GM12878 (cell line): ENCODE measurements at regions of chr1 and their contacts with region 1.

Region 1: GRCh38 chr1:54488779-54489626 is 59.0 kb upstream of the ACOT11 start:
- DNase-seq: no peak
- ATAC-seq: peak; percentile 91
- H3K4me3 ChIP-seq: peak overlapping the region; percentile 94
- H3K27ac ChIP-seq: peak overlapping the region; percentile 55
- H3K4me1 ChIP-seq: peaks cover 7% of the 10 kb centered on the region
- H3K27me3 ChIP-seq: peaks cover 0 to 2% of the 10 kb centered on the region in 2 experiments; a peak in 1 of 4 replicates
- CTCF ChIP-seq: peak; percentile 78 to 98 (median 91)
- EP300 ChIP-seq: no peak
- POLR2A ChIP-seq: no peak
- RAD21 ChIP-seq: peak; percentile 85

Region 2: DNA sequence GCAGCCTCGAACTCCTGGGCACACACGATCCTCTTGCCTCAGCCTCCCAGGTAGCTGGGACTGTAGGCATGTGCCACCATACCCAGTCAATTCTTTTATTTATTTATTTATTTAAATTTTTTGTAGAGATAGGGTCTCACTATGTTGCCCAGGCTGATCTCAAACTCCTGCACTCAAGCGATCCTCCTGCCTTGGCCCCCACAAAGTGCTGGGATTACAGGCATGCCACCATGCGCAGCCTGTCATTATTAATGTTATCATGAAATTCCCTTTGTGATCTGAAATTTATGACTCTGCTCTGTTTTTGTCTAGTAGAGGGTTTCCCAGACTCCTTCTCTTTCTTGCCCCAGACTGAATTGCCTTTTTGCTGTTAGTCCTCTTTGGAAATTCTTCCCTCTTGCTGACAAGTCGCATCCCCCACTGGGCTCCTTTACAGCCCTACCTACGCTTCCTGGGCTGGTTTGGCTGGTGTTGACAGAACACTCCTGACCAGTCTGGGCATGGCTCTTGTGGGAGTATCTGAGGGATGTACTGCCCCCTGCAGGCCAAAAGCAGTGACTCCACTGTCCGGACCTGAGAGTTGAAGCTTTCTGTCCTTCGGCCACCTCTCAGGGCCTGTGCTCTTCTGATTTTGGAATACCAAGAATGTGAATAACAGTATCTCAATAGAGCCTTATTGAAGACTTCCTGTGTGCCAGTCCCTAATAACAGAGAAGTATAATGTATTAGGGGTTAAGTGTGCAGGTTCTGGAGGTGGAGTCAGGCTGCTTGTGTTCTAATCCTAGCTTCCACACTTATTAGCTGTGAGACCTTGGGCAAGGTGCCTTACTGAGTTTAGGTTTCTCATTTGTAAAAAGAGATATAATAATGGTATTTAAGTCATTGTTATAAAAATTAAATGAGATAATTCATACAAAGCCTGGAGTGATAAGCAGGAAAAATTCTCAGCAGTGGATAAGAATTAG is 407.4 kb before region 1 on chr1:
- CTCF ChIA-PET with region 1: interaction called, 11 read pairs
- POLR2A ChIA-PET with region 1: no interaction called
- RAD21 ChIA-PET with region 1: no interaction called
- SMC1A ChIA-PET with region 1: no interaction called
- in situ Hi-C with region 1: no loop called
- intact Hi-C with region 1: no loop called
- DNase-seq: peak; percentile 23
- ATAC-seq: peak; percentile 100
- H3K4me3 ChIP-seq: no peak overlapping the region
- H3K27ac ChIP-seq: no peak overlapping the region
- H3K4me1 ChIP-seq: no peaks in the 10 kb centered on the region
- H3K27me3 ChIP-seq: no peaks in the 10 kb centered on the region
- CTCF ChIP-seq: peak; percentile 66 to 89 (median 82)
- EP300 ChIP-seq: no peak
- POLR2A ChIP-seq: no peak
- RAD21 ChIP-seq: peak; percentile 56

Region 3: GRCh38 chr1:54180701-54181360 is 308.2 kb before region 1 on chr1:
- CTCF ChIA-PET with region 1: interaction called, 34 read pairs
- POLR2A ChIA-PET with region 1: no interaction called
- RAD21 ChIA-PET with region 1: interaction called, 18 read pairs
- SMC1A ChIA-PET with region 1: interaction called, 8 read pairs
- in situ Hi-C with region 1: no loop called
- intact Hi-C with region 1: loop called (anchors 5 kb)
- DNase-seq: no peak
- ATAC-seq: no peak
- H3K4me3 ChIP-seq: no peak overlapping the region
- H3K27ac ChIP-seq: no peak overlapping the region
- H3K4me1 ChIP-seq: no peaks in the 10 kb centered on the region
- H3K27me3 ChIP-seq: no peaks in the 10 kb centered on the region
- CTCF ChIP-seq: no peak
- EP300 ChIP-seq: no peak
- POLR2A ChIP-seq: no peak
- RAD21 ChIP-seq: no peak

Region 4: DNA sequence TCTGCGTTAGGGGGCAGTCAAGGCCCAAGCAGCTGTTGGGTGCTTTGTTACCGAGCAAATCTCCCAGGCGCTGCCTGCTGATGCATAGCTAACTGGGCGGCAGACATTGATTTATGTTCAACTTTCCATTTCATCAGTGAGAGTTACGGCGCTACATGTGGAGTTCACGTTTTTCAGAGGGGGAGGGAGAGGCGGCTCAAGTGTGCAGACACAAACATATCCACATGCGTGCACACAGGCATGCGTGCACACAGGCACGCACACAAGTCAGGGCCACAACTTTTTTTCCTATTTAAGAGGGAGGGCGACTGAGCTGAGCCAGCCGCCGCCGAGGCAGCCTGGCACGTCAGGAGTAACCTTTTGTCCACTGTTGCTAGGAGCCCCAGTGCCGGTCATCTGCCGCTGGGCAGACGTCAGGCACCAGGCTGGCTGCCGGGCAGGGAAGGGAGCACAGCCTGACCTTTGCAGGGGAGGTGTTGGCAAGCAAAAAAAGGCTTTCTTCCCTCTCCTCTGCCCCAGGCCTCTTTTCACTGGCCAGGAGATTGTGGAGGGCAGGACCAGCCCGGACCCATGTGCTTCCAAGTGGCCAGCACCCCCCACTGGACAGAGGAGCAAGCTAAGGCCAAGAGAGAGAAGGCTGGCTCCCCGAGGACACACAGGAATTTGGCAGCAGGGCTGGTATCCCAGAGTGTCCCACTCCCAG is 215.8 kb before region 1 on chr1:
- CTCF ChIA-PET with region 1: interaction called, 20 read pairs
- POLR2A ChIA-PET with region 1: no interaction called
- RAD21 ChIA-PET with region 1: interaction called, 37 read pairs
- SMC1A ChIA-PET with region 1: interaction called, 11 read pairs
- in situ Hi-C with region 1: no loop called
- intact Hi-C with region 1: loop called (anchors 1 kb)
- DNase-seq: peak; percentile 19
- ATAC-seq: peak; percentile 96
- H3K4me3 ChIP-seq: no peak overlapping the region
- H3K27ac ChIP-seq: no peak overlapping the region
- H3K4me1 ChIP-seq: peaks cover 10% of the 10 kb centered on the region
- H3K27me3 ChIP-seq: no peaks in the 10 kb centered on the region
- CTCF ChIP-seq: peak in 2 of 3 experiments; percentile 62 to 64; a peak in 4 of 6 replicates
- EP300 ChIP-seq: 0 out of 4 replicates have a peak, but pooled peaks of 1 of the 2 experiments have one; percentile 42
- POLR2A ChIP-seq: no peak
- RAD21 ChIP-seq: peak; percentile 35; the same call in 1 of the 2 replicates

Region 5: GRCh38 chr1:54355931-54356679 is 132.9 kb before region 1 on chr1:
- CTCF ChIA-PET with region 1: interaction called, 25 read pairs
- POLR2A ChIA-PET with region 1: interaction called, 3 read pairs
- RAD21 ChIA-PET with region 1: interaction called, 7 read pairs
- SMC1A ChIA-PET with region 1: interaction called, 6 read pairs
- in situ Hi-C with region 1: no loop called
- intact Hi-C with region 1: loop called (anchors 2 kb)
- DNase-seq: no peak
- ATAC-seq: peak; percentile 63
- H3K4me3 ChIP-seq: peak overlapping the region; percentile 34
- H3K27ac ChIP-seq: peak overlapping the region; percentile 66
- H3K4me1 ChIP-seq: peaks cover 20% of the 10 kb centered on the region
- H3K27me3 ChIP-seq: no peaks in the 10 kb centered on the region
- CTCF ChIP-seq: no peak
- EP300 ChIP-seq: no peak
- POLR2A ChIP-seq: no peak
- RAD21 ChIP-seq: no peak

Region 6: GRCh38 chr1:54406339-54407153 is 82.5 kb before region 1 on chr1 and contains the start of gene SSBP3:
- CTCF ChIA-PET with region 1: interaction called, 24 read pairs
- POLR2A ChIA-PET with region 1: interaction called, 30 read pairs
- RAD21 ChIA-PET with region 1: interaction called, 26 read pairs
- SMC1A ChIA-PET with region 1: interaction called, 30 read pairs
- in situ Hi-C with region 1: loop called (anchors 5 kb)
- intact Hi-C with region 1: loop called (anchors 1 kb)
- DNase-seq: peak; percentile 60
- ATAC-seq: peak; percentile 90
- H3K4me3 ChIP-seq: peak within 1 kb of the TSS; percentile 96
- H3K27ac ChIP-seq: peak within 1 kb of the TSS; percentile 84
- H3K4me1 ChIP-seq: peaks cover 38% of the 10 kb centered on the region
- H3K27me3 ChIP-seq: no peaks in the 10 kb centered on the region
- CTCF ChIP-seq: no peak
- EP300 ChIP-seq: no peak
- POLR2A ChIP-seq: peak; percentile 85
- RAD21 ChIP-seq: no peak
- polyA plus RNA-seq, gene SSBP3: 4.1 to 7.9 TPM

Region 7: DNA sequence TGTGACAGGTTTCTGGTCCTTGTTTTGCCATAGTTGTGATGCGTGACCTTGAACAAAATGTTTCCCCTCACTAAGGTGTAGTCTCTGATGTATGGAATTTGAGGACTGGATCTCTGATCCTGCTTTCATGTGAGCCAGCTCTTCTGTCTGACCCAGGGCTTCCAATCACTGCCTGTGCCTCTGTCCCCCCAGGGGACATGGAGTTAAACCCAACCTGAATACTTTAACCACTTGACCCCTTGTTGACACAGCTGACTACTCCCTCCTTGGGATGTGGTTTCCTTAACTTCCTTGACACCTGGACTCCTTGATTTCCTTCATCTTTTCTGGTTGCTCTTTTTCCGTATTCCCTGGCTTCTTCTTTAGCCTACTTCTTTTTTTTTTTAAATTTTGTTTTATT is 46.8 kb before region 1 on chr1:
- CTCF ChIA-PET with region 1: no interaction called
- POLR2A ChIA-PET with region 1: no interaction called
- RAD21 ChIA-PET with region 1: no interaction called
- SMC1A ChIA-PET with region 1: no interaction called
- in situ Hi-C with region 1: no loop called
- intact Hi-C with region 1: no loop called
- DNase-seq: no peak
- ATAC-seq: no peak
- H3K4me3 ChIP-seq: no peak overlapping the region
- H3K27ac ChIP-seq: no peak overlapping the region
- H3K4me1 ChIP-seq: no peaks in the 10 kb centered on the region
- H3K27me3 ChIP-seq: no peaks in the 10 kb centered on the region; a peak in 1 of 4 replicates
- CTCF ChIP-seq: no peak
- EP300 ChIP-seq: no peak
- POLR2A ChIP-seq: no peak
- RAD21 ChIP-seq: no peak

Region 8: DNA sequence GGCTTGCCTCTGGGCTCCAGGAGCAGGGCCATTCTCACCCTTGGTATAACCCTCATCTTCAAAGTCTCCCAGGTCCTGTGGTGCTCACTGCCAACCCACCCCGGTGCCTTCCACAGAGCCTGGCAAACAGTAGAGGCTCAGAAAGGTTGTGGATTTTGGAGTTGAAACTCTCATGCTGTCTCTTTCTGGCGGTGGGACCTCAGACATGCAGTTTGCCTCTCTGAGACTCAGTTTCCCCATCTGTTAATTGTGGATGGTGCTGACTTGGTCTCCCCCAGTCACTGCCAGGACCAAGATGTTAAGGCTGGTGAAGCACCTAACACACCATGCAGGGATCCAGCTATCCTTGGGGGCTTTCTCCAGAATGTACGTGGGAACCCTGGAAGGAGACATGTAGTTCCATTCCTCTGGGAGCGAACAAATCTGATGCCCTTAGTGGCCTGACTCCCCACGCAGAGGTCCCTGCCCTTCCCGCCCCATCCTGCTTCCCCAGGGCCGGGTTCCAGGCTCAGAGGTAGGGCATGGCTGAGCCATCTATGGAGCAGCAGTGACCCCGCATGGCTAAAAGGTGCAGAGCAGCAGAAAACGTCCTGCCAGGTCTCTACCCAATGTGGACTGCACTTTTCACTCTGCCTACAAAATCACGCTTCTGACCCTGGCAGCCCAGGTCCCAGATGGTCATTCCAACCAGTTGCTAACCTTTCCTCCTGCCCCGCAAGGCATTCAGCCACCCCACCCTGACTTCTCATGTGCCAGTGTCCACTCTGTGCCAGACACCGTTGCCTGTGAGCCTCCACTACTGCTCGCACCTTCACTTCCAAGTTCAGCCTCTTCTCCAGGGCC is 321.3 kb after region 1 on chr1:
- CTCF ChIA-PET with region 1: interaction called, 5 read pairs
- POLR2A ChIA-PET with region 1: no interaction called
- RAD21 ChIA-PET with region 1: interaction called, 3 read pairs
- SMC1A ChIA-PET with region 1: interaction called, 4 read pairs
- in situ Hi-C with region 1: no loop called
- intact Hi-C with region 1: loop called (anchors 5 kb)
- DNase-seq: no peak
- ATAC-seq: peak; percentile 82
- H3K4me3 ChIP-seq: no peak overlapping the region
- H3K27ac ChIP-seq: no peak overlapping the region
- H3K4me1 ChIP-seq: peaks cover 13% of the 10 kb centered on the region
- H3K27me3 ChIP-seq: no peaks in the 10 kb centered on the region
- CTCF ChIP-seq: peak; percentile 91 to 96 (median 91)
- EP300 ChIP-seq: no peak
- POLR2A ChIP-seq: no peak
- RAD21 ChIP-seq: peak; percentile 98